Caki2 (cell line): ENCODE measurements at regions of chr12 and their contacts with region 1.

Region 1: DNA sequence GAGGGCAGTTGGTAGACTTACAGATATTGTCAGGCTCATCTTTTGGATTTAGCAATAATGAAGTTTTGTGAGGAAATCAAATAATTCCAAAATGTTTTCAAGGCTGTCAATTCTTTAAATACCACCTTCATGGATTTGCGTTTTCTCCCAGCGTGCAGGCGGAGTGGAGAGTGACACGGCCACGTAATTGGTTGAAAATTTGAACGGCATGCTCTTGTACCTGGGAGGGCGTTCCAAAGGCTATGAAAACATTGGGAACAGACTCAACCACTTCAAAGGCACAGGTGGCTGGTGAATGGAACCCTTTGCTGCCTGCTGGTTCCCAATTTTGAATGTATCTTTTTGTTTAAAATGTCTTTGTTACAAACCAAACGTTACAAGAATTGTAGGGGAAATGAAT is 12.4 kb downstream of the SMIM41 start:
- DNase-seq: no peak

Region 2: GRCh38 chr12:52023182-52023975 is 68.5 kb before region 1 on chr12:
- in situ Hi-C with region 1: loop called (anchors 5 kb)
- DNase-seq: peak; percentile 92

Region 3: GRCh38 chr12:52506858-52507715 is 415.2 kb after region 1 on chr12:
- in situ Hi-C with region 1: no loop called
- DNase-seq: peak; percentile 35